ENCODE measurements at regions of chr2 and their contacts with region 1.

Region 1: GRCh38 chr2:127025359-127026166 is 81.4 kb downstream of the BIN1 start:
- DNase-seq: peak in 1 of 2 experiments; percentile 57
- H3K4me3 ChIP-seq: peak overlapping the region; percentile 50 to 75 (median 60)
- H3K27ac ChIP-seq: no peak overlapping the region
- H3K4me1 ChIP-seq: peaks cover 0 to 3% (median 2%) of the 10 kb centered on the region in 4 experiments; a peak in 3 of 7 replicates
- H3K27me3 ChIP-seq: no peaks in the 10 kb centered on the region
- CTCF ChIP-seq: peak in 2 of 3 experiments; percentile 29 to 48; a peak in 3 of 4 replicates
- EP300 ChIP-seq: no peak
- POLR2A ChIP-seq: peak; percentile 37 to 60; a peak in 1 of 3 replicates
- RAD21 ChIP-seq: peak; percentile 33 to 44

Region 2: DNA sequence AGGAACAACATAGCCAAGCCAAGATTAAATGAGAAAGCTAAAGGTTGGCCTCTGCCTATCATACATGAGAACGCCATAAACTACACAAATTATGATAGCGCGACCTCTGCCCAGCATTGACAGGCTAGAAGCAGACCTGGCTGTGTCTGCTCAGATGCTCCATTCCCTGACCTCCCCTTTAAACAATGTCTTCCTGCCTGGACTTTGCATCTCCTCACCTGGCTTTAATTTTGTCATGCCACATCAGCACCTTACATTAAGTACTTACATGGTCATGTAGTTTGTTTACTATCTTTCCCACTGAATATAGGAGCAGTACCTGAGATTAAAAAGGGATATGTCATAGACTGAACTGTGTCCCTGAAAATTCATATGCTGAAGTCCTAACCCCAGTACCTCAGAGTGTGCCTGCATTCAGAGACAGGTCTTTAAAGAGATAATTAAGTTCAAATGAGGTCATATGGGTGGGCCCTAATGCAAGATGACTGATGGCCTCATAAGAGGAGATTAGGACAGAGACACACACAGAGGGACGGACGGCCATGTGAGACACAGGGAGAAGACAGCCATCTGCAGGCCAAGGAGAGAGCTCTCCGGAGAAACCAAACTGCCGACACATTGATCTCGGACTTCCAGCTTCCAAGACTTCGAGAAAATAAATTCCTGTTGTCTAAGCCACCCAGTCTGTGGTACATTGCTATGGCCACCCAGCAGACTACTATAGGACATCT is 22.3 kb before region 1 on chr2:
- CTCF ChIA-PET with region 1: interaction called, 11 read pairs
- POLR2A ChIA-PET with region 1: no interaction called
- DNase-seq: no peak
- H3K4me3 ChIP-seq: no peak overlapping the region
- H3K27ac ChIP-seq: no peak overlapping the region
- H3K4me1 ChIP-seq: peaks cover 0 to 2% (median under 1%) of the 10 kb centered on the region in 4 experiments; a peak in 1 of 7 replicates
- H3K27me3 ChIP-seq: no peaks in the 10 kb centered on the region
- CTCF ChIP-seq: peak in 1 of 3 experiments; percentile 4; a peak in 1 of 4 replicates
- EP300 ChIP-seq: no peak
- POLR2A ChIP-seq: no peak
- RAD21 ChIP-seq: peak; percentile 14 to 29; a peak in 2 of 4 replicates

Region 3: GRCh38 chr2:127049927-127050802 is 24.6 kb after region 1 on chr2:
- CTCF ChIA-PET with region 1: interaction called, 20 read pairs
- POLR2A ChIA-PET with region 1: no interaction called
- DNase-seq: peak; percentile 41 to 95
- H3K4me3 ChIP-seq: no peak overlapping the region
- H3K27ac ChIP-seq: no peak overlapping the region
- H3K4me1 ChIP-seq: peaks cover 0 to 6% (median 0%) of the 10 kb centered on the region in 4 experiments; a peak in 2 of 7 replicates
- H3K27me3 ChIP-seq: no peaks in the 10 kb centered on the region
- CTCF ChIP-seq: peak in 2 of 3 experiments; percentile 85 to 96; a peak in 3 of 4 replicates
- EP300 ChIP-seq: no peak; a peak in 1 of 3 replicates
- POLR2A ChIP-seq: no peak
- RAD21 ChIP-seq: peak; percentile 82 to 87